B cell (primary cell): ENCODE measurements at regions of chr13 and their contacts with region 1.

Region 1: GRCh38 chr13:103140001-103140671 is 73.9 kb upstream of the SLC10A2 start:
- DNase-seq: peak; percentile 63
- ATAC-seq: peak; percentile 24
- H3K4me3 ChIP-seq: no peak overlapping the region
- H3K4me3 Mint-ChIP-seq: no peak overlapping the region
- H3K27ac ChIP-seq: no peak overlapping the region
- H3K27ac Mint-ChIP-seq: no peak overlapping the region
- H3K4me1 ChIP-seq: peaks cover 0 to 5% of the 10 kb centered on the region in 2 donors
- H3K4me1 Mint-ChIP-seq: no peaks in the 10 kb centered on the region
- H3K27me3 ChIP-seq: no peaks in the 10 kb centered on the region
- H3K27me3 Mint-ChIP-seq: no peaks in the 10 kb centered on the region
- CTCF ChIP-seq: peak; percentile 64

Region 2: GRCh38 chr13:102913914-102914313 is 226.2 kb before region 1 on chr13:
- CTCF ChIA-PET with region 1: interaction called, 23 read pairs
- POLR2A ChIA-PET with region 1: no interaction called
- intact Hi-C with region 1: no loop called
- DNase-seq: no peak
- ATAC-seq: no peak
- H3K4me3 ChIP-seq: no peak overlapping the region
- H3K4me3 Mint-ChIP-seq: no peak overlapping the region
- H3K27ac ChIP-seq: no peak overlapping the region
- H3K27ac Mint-ChIP-seq: no peak overlapping the region
- H3K4me1 ChIP-seq: no peaks in the 10 kb centered on the region
- H3K4me1 Mint-ChIP-seq: peaks cover 4% of the 10 kb centered on the region
- H3K27me3 ChIP-seq: no peaks in the 10 kb centered on the region
- H3K27me3 Mint-ChIP-seq: no peaks in the 10 kb centered on the region
- CTCF ChIP-seq: no peak

Region 3: GRCh38 chr13:102999499-102999898 is 140.6 kb before region 1 on chr13:
- CTCF ChIA-PET with region 1: no interaction called
- POLR2A ChIA-PET with region 1: no interaction called
- intact Hi-C with region 1: no loop called
- DNase-seq: no peak
- ATAC-seq: no peak
- H3K4me3 ChIP-seq: no peak overlapping the region
- H3K4me3 Mint-ChIP-seq: no peak overlapping the region
- H3K27ac ChIP-seq: no peak overlapping the region
- H3K27ac Mint-ChIP-seq: no peak overlapping the region
- H3K4me1 ChIP-seq: peaks cover 9 to 21% of the 10 kb centered on the region in 2 donors
- H3K4me1 Mint-ChIP-seq: peaks cover 15% of the 10 kb centered on the region
- H3K27me3 ChIP-seq: no peaks in the 10 kb centered on the region
- H3K27me3 Mint-ChIP-seq: no peaks in the 10 kb centered on the region
- CTCF ChIP-seq: no peak

Region 4: DNA sequence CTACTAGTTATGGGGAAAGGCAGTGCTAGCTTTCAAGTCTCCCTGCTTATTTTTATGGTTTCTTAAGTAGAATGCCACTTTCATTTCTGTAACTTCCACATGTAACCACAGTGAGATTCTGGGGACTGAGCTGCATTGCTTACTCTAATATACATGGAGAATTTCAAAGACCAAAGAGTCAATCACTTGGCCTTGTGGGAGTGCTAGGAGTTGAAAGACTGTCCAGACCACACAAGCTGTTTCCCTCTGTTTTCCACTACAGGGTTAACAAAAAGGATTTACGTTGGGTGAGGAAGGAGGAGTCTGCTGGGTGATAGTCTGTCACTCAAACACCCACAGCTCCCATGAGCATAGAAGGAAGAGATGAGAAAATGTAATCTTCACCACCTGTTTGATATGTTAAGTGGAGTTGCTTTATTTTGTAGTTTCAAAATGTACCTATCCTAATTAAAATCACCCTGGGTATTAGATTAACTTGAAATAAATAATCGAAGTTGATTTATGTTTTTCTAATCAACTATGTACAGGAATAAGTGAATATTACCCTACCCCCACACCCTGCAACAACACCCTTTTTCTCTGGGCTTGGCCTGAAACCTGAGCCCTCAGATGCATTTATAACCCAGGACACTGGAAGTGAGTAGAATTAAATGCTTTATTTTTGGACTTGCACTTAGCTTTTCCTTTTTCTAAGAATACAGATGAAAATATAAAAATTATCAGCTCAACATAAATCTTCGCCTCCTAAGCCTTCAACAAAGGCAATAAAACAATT is 151.8 kb after region 1 on chr13:
- CTCF ChIA-PET with region 1: no interaction called
- POLR2A ChIA-PET with region 1: no interaction called
- intact Hi-C with region 1: no loop called
- DNase-seq: no peak
- ATAC-seq: no peak
- H3K4me3 ChIP-seq: no peak overlapping the region
- H3K4me3 Mint-ChIP-seq: no peak overlapping the region
- H3K27ac ChIP-seq: no peak overlapping the region
- H3K27ac Mint-ChIP-seq: no peak overlapping the region
- H3K4me1 ChIP-seq: no peaks in the 10 kb centered on the region
- H3K4me1 Mint-ChIP-seq: no peaks in the 10 kb centered on the region
- H3K27me3 ChIP-seq: no peaks in the 10 kb centered on the region
- H3K27me3 Mint-ChIP-seq: no peaks in the 10 kb centered on the region
- CTCF ChIP-seq: no peak